ENCODE measurements at regions of chr4 and their contacts with region 1.

Region 1: DNA sequence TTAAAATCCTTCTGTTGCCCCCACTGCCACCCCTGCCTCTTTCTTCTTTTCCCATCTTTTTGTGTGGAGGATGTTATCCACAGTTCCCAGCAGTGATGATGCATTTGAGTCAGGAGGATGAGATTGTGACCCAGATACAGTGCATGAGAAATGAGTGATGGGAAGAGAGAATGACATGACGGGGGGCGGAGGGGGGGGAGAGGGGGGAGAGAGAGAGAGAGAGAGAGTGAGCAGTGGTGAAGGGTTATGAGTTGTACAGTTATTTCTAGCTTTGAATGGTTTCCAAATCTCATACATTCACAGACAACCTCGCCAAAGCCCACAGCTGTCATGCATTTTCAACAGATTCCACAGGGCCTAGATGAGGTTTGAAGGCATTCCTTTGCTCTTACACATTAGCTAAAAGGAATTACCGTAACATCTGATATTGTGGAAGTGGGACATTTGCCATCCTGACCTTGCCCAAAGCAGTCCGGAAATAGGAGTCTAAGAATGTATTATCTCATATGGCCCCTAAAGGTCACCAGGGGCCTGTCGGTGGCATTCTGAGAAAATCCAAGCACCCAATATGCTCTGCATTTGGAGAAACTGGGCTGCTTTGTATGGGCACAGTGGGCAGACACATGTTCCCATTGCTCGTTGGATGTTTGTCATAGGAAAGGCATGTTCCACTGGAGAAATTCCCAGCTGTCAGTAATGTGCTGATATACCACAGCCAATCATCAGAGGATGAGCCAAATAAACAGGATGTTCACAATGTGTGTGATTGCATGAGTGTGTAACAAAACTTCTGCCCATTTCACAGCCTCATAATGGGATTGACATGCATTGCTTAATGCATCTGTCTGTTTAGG is 435.8 kb downstream of the SPRY1 start:
- DNase-seq: no peak
- ATAC-seq: no peak
- H3K4me3 ChIP-seq: no peak overlapping the region
- H3K27ac ChIP-seq: no peak overlapping the region
- H3K4me1 ChIP-seq: no peaks in the 10 kb centered on the region
- H3K27me3 ChIP-seq: no peaks in the 10 kb centered on the region
- CTCF ChIP-seq: no peak
- EP300 ChIP-seq: no peak
- POLR2A ChIP-seq: no peak
- RAD21 ChIP-seq: no peak

Region 2: GRCh38 chr4:122710434-122711308 is 1121.7 kb before region 1 on chr4:
- CTCF ChIA-PET with region 1: no interaction called
- POLR2A ChIA-PET with region 1: no interaction called
- in situ Hi-C with region 1: no loop called
- intact Hi-C with region 1: no loop called
- DNase-seq: no peak
- ATAC-seq: peak; percentile 34
- H3K4me3 ChIP-seq: no peak overlapping the region
- H3K27ac ChIP-seq: no peak overlapping the region
- H3K4me1 ChIP-seq: peaks cover 4 to 29% of the 10 kb centered on the region in 2 experiments
- H3K27me3 ChIP-seq: no peaks in the 10 kb centered on the region; a peak in 1 of 5 replicates
- CTCF ChIP-seq: no peak
- EP300 ChIP-seq: no peak
- POLR2A ChIP-seq: no peak
- RAD21 ChIP-seq: no peak

Region 3: GRCh38 chr4:123547216-123548165 is 284.9 kb before region 1 on chr4:
- CTCF ChIA-PET with region 1: no interaction called
- POLR2A ChIA-PET with region 1: no interaction called
- in situ Hi-C with region 1: no loop called
- intact Hi-C with region 1: no loop called
- DNase-seq: peak in 3 of 4 experiments; percentile 21 to 34 (median 29)
- ATAC-seq: peak; percentile 86
- H3K4me3 ChIP-seq: no peak overlapping the region
- H3K27ac ChIP-seq: no peak overlapping the region
- H3K4me1 ChIP-seq: peaks cover 7 to 9% of the 10 kb centered on the region in 2 experiments; a peak in 3 of 5 replicates
- H3K27me3 ChIP-seq: peaks cover 0 to 14% of the 10 kb centered on the region in 2 experiments; a peak in 2 of 5 replicates
- CTCF ChIP-seq: no peak
- EP300 ChIP-seq: no peak
- POLR2A ChIP-seq: no peak
- RAD21 ChIP-seq: no peak

Region 4: DNA sequence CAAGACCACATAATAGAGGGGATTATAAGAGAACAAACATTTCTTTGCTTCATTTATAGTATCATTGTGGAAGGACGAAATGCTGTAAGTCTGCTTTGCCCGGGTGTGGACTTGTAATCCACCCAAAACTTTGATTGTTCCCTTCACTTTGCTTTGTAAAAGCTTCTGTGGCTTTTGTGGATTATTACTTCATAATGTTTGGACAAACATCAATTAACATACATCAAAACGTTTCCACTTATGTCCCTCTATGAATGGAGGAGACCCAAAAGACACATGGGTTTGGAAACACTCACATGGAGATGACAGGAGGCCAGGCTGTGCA is 20.4 kb before region 1 on chr4:
- CTCF ChIA-PET with region 1: no interaction called
- POLR2A ChIA-PET with region 1: no interaction called
- in situ Hi-C with region 1: no loop called
- intact Hi-C with region 1: loop called (anchors 1 kb)
- DNase-seq: no peak
- ATAC-seq: no peak
- H3K4me3 ChIP-seq: no peak overlapping the region
- H3K27ac ChIP-seq: no peak overlapping the region
- H3K4me1 ChIP-seq: no peaks in the 10 kb centered on the region
- H3K27me3 ChIP-seq: no peaks in the 10 kb centered on the region
- CTCF ChIP-seq: no peak
- EP300 ChIP-seq: no peak
- POLR2A ChIP-seq: no peak
- RAD21 ChIP-seq: no peak

Measured in K562 (cell line).